B cell (primary cell): ENCODE measurements at regions of chr5 and their contacts with region 1.

Region 1: GRCh38 chr5:172984243-172984953 is 827 bp downstream of the ATP6V0E1 start:
- DNase-seq: peak; percentile 82
- ATAC-seq: peak; percentile 56
- H3K4me3 ChIP-seq: peak overlapping the region; percentile 96 to 99 (median 96)
- H3K4me3 Mint-ChIP-seq: peak overlapping the region; percentile 98
- H3K27ac ChIP-seq: peak overlapping the region; percentile 93 to 97
- H3K27ac Mint-ChIP-seq: peak overlapping the region; percentile 99
- H3K4me1 ChIP-seq: peaks cover 15 to 23% of the 10 kb centered on the region in 2 donors
- H3K4me1 Mint-ChIP-seq: peaks cover 45% of the 10 kb centered on the region
- H3K27me3 ChIP-seq: no peaks in the 10 kb centered on the region
- H3K27me3 Mint-ChIP-seq: no peaks in the 10 kb centered on the region
- CTCF ChIP-seq: peak; percentile 70

Region 2: GRCh38 chr5:173035904-173036707 is 51.7 kb after region 1 on chr5:
- CTCF ChIA-PET with region 1: interaction called, 6 read pairs
- POLR2A ChIA-PET with region 1: interaction called, 11 read pairs
- intact Hi-C with region 1: loop called (anchors 5 kb)
- DNase-seq: peak; percentile 48
- ATAC-seq: peak; percentile 8
- H3K4me3 ChIP-seq: peak overlapping the region in 4 of 5 experiments; percentile 38 to 75 (median 57)
- H3K4me3 Mint-ChIP-seq: peak overlapping the region; percentile 93
- H3K27ac ChIP-seq: peak overlapping the region; percentile 77 to 81
- H3K27ac Mint-ChIP-seq: peak overlapping the region; percentile 93
- H3K4me1 ChIP-seq: peaks cover 27 to 35% of the 10 kb centered on the region in 2 donors
- H3K4me1 Mint-ChIP-seq: peaks cover 57% of the 10 kb centered on the region
- H3K27me3 ChIP-seq: no peaks in the 10 kb centered on the region
- H3K27me3 Mint-ChIP-seq: no peaks in the 10 kb centered on the region
- CTCF ChIP-seq: no peak

Region 3: GRCh38 chr5:173144200-173145176 is 160.1 kb after region 1 on chr5 and contains the start of gene BNIP1:
- CTCF ChIA-PET with region 1: interaction called, 19 read pairs
- POLR2A ChIA-PET with region 1: interaction called, 4 read pairs
- intact Hi-C with region 1: loop called (anchors 1 kb)
- DNase-seq: peak; percentile 97
- ATAC-seq: peak; percentile 90
- H3K4me3 ChIP-seq: peak within 1 kb of the TSS; percentile 79 to 100 (median 97)
- H3K4me3 Mint-ChIP-seq: peak within 1 kb of the TSS; percentile 98
- H3K27ac ChIP-seq: peak within 1 kb of the TSS; percentile 90 to 95
- H3K27ac Mint-ChIP-seq: peak within 1 kb of the TSS; percentile 98
- H3K4me1 ChIP-seq: peaks cover 3 to 8% of the 10 kb centered on the region in 2 donors
- H3K4me1 Mint-ChIP-seq: peaks cover 8% of the 10 kb centered on the region
- H3K27me3 ChIP-seq: no peaks in the 10 kb centered on the region
- H3K27me3 Mint-ChIP-seq: no peaks in the 10 kb centered on the region
- CTCF ChIP-seq: peak; percentile 81
- total RNA-seq, gene BNIP1: 8.0 and 10.0 TPM in 2 replicates

Region 4: GRCh38 chr5:173283318-173284288 is 299.2 kb after region 1 on chr5:
- CTCF ChIA-PET with region 1: no interaction called
- POLR2A ChIA-PET with region 1: no interaction called
- intact Hi-C with region 1: loop called (anchors 2 kb)
- DNase-seq: peak; percentile 52
- ATAC-seq: peak; percentile 61
- H3K4me3 ChIP-seq: peak overlapping the region in 1 of 5 experiments; percentile 14
- H3K4me3 Mint-ChIP-seq: peak overlapping the region; percentile 10
- H3K27ac ChIP-seq: no peak overlapping the region
- H3K27ac Mint-ChIP-seq: no peak overlapping the region
- H3K4me1 ChIP-seq: peaks cover 3 to 8% of the 10 kb centered on the region in 2 donors
- H3K4me1 Mint-ChIP-seq: peaks cover 10% of the 10 kb centered on the region
- H3K27me3 ChIP-seq: peaks cover 0 to 29% (median 12%) of the 10 kb centered on the region in 4 experiments
- H3K27me3 Mint-ChIP-seq: peaks cover 66% of the 10 kb centered on the region
- CTCF ChIP-seq: peak; percentile 45